ENCODE measurements at regions of chr19 and their contacts with region 1.

Region 1: DNA sequence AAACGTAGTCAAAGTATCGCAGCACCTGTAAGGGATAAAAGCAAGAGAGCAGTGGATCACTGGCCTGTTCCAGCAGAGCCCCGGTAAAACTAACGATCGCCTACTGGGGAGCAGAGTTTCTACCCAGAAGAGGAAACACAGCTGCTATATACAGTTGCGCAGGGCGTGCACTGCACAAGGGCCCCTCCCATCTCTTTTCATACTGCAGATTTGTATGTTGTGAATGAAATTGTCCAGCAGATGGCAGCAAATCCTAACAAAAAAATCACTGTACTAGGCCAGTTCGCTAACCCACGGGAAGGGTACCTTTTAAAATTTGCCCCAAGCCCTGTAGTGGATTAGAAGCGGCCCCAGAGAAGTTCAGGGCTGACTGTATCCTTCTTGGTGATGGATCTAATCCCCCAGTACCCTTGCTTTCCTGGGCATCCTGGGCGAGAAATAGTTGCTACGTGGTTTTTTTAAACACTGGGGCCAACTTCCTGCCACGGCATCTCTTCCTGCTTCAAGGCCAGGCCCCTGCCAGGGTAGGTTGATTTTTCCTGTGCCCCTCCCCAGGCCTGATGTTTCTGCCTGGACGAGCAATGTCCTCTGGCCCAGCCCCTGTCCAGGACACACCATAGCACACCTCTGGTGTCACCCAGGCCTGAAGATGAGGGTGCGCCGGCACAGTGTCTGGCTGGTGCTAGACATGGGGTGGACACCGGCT is 127.0 kb downstream of the IER2 start:
- DNase-seq: peak; percentile 78
- H3K4me3 ChIP-seq: no peak overlapping the region
- H3K27ac ChIP-seq: no peak overlapping the region
- H3K4me1 ChIP-seq: no peaks in the 10 kb centered on the region
- H3K27me3 ChIP-seq: no peaks in the 10 kb centered on the region
- CTCF ChIP-seq: peak; percentile 62

Region 2: GRCh38 chr19:13373602-13374001 is 96.3 kb after region 1 on chr19:
- intact Hi-C with region 1: no loop called
- DNase-seq: no peak
- H3K4me3 ChIP-seq: no peak overlapping the region
- H3K27ac ChIP-seq: no peak overlapping the region
- H3K4me1 ChIP-seq: no peaks in the 10 kb centered on the region
- H3K27me3 ChIP-seq: no peaks in the 10 kb centered on the region
- CTCF ChIP-seq: no peak

Region 3: GRCh38 chr19:13430790-13431582 is 153.7 kb after region 1 on chr19:
- intact Hi-C with region 1: loop called (anchors 5 kb)
- DNase-seq: peak; percentile 37
- H3K4me3 ChIP-seq: no peak overlapping the region
- H3K27ac ChIP-seq: no peak overlapping the region
- H3K4me1 ChIP-seq: no peaks in the 10 kb centered on the region
- H3K27me3 ChIP-seq: no peaks in the 10 kb centered on the region
- CTCF ChIP-seq: peak; percentile 50

Region 4: DNA sequence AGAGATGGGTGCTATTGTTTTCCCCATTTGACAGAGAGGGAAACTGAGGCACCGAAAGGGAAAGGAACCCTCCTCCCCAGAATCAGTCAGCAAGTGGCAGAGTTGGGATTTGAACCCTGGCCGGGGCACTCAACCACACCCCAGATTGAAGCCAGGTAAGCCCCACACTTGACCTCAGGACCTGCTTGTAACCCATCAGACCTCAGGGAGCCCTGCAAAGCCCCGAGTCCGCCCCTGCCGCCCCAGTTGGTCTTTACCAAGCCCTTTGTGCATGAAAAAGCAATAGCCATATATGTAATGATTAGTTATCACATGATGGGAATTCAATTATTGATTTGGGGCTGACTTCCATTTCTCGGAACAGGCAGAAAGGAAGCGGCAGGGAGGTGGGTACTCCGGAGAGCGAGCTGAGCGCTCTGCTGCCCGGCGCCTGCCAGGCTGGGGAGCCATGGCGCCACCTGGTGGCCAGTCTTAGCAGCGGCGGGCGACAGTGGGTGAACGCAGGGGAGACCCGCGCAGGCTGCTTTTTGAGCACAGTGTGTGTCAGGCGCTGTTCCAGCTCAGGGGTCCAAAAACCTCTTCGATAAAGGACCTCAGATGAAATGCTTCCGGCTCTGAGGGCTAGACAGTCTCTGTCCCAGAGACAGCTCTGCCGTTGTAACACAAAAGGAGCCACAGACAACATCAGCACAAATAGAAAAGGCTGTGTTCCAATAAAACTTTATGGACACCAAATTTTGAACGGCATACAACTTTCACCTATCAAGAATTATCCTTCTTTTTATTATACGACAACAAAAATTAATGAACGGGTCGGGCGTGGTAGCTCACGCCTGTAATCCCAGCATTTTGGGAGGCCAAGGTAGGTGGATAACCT is 311.9 kb after region 1 on chr19:
- intact Hi-C with region 1: loop called (anchors 2 kb)
- DNase-seq: peak; percentile 67
- H3K4me3 ChIP-seq: no peak overlapping the region
- H3K27ac ChIP-seq: no peak overlapping the region
- H3K4me1 ChIP-seq: no peaks in the 10 kb centered on the region
- H3K27me3 ChIP-seq: no peaks in the 10 kb centered on the region
- CTCF ChIP-seq: peak; percentile 99

Region 5: GRCh38 chr19:13718733-13719132 is 441.5 kb after region 1 on chr19:
- intact Hi-C with region 1: loop called (anchors 2 kb)
- DNase-seq: peak; percentile 31
- H3K4me3 ChIP-seq: no peak overlapping the region
- H3K27ac ChIP-seq: no peak overlapping the region
- H3K4me1 ChIP-seq: no peaks in the 10 kb centered on the region
- H3K27me3 ChIP-seq: no peaks in the 10 kb centered on the region
- CTCF ChIP-seq: no peak

Measured in colonic mucosa (tissue), 4 donors.